ENCODE measurements at regions of chr10 and their contacts with region 1.

Region 1: DNA sequence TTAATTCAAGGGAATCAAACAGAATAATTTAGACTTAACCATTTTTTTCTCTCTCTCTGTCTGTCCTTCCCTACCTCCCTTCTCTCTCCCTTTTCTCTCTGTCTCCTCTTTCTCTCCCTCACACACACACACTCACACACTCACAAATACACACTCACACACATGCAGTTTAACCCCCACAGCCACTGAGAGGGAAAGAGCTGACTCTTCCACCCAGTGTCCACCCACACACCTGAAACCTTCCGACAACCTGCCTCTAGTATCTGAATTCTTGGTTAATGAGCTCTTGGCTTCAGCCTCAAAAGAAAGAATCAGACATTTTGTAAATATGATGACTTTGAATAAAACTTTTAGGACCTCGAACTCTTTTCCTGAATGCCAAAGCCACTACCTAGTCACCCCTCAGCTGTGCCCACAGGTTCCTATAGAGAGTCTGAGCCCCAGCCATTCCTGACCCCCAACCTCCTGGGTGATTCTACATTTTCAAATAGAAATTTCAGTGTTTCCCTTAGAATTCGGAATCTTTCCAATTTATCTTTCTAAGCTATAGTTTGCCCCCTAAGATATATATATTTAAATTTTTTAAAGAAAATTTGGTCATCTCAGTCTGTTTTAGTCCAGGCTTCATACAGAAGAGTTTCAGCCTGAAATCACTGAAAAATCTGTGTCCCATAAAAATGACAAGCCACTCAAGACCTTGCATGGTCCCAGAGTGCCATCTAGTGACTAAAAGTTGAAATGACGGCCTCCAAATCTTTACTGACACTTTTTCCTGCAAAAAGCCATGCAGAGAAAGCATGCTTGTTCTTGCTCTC is 202.8 kb downstream of the IPMK start:
- DNase-seq: peak; percentile 24 to 63
- ATAC-seq: peak in 1 of 2 experiments; percentile 68; a peak in 3 of 6 replicates
- H3K4me3 ChIP-seq: no peak overlapping the region
- H3K27ac ChIP-seq: peak overlapping the region; percentile 20 to 60; a peak in 4 of 6 replicates
- H3K4me1 ChIP-seq: peaks cover 7% of the 10 kb centered on the region
- CTCF ChIP-seq: peak; percentile 92
- EP300 ChIP-seq: no peak
- POLR2A ChIP-seq: no peak
- RAD21 ChIP-seq: peak; percentile 97

Region 2: DNA sequence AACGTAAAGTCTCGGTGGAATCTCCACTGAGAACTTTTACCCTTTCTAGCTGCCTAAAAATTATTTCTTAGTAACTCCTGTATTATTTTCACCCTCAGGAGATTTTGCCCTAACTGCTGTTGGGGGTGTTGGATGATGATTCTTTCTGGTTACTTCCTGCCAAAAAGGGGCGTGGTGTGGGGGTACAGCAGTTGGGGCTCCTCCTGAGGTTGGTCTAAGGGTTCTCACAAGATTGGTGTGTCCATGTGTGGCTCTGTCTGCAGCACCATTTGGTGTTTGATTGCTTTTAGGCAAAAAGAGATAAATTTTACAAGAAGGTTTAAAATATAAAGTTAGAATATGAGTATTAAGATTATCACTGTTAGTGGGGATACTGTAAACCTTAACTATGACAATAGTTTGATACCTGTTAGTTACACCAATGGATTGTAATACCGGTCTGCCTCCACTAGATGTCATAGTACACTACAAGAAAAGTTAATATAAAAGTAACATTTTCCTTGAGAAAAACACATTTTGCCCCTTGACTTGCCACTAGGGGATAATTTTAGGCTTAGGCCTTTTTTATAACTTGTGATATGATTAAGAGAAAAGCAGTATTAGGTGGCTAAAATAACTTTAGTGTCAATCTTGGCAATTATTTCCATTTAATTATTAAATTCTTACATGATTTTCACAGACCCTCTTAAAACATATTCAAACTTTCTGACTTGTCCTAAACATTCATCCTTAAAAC is 725.9 kb before region 1 on chr10:
- CTCF ChIA-PET with region 1: interaction called, 22 read pairs
- POLR2A ChIA-PET with region 1: no interaction called
- DNase-seq: peak; percentile 18 to 58
- ATAC-seq: peak; percentile 59 to 69; a peak in 4 of 6 replicates
- H3K4me3 ChIP-seq: no peak overlapping the region
- H3K27ac ChIP-seq: no peak overlapping the region
- H3K4me1 ChIP-seq: no peaks in the 10 kb centered on the region
- CTCF ChIP-seq: peak; percentile 80
- EP300 ChIP-seq: no peak
- POLR2A ChIP-seq: no peak
- RAD21 ChIP-seq: peak; percentile 70 to 81

Region 3: GRCh38 chr10:57579926-57580325 is 485.0 kb before region 1 on chr10:
- CTCF ChIA-PET with region 1: interaction called, 25 read pairs
- POLR2A ChIA-PET with region 1: no interaction called
- DNase-seq: peak; percentile 2 to 60
- ATAC-seq: peak; percentile 91 to 96; a peak in 5 of 6 replicates
- H3K4me3 ChIP-seq: no peak overlapping the region
- H3K27ac ChIP-seq: no peak overlapping the region
- H3K4me1 ChIP-seq: no peaks in the 10 kb centered on the region
- CTCF ChIP-seq: peak; percentile 61
- EP300 ChIP-seq: no peak
- POLR2A ChIP-seq: no peak
- RAD21 ChIP-seq: peak; percentile 86 to 89

Region 4: DNA sequence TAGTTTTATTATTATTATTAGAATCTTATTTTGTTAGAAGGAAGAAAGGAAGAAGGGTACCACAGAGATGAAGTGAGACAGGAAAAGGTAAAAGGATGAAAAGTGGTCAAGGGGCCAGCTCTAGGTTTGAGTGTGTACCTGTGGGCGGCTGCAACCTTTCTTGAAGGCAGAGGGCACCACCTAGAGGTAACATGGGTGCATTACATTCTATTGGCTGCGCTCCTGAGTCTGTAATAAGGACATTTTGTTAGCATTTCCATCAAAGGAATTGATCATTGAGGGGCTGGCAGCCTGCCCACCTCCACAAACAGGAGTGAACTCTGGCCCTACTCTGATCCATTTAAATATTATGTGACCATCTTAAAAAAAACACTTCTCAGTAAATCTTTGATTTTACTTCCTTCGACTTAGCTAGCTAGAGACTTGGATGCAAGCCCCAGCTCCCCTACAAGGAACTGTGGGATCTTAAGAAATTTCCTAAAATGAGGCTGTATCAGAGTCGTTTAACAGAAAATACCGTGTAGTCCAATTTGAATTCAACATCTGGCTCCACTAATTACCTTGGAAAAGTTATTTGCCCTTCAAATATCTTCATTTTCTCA is 407.7 kb before region 1 on chr10:
- CTCF ChIA-PET with region 1: interaction called, 11 read pairs
- POLR2A ChIA-PET with region 1: no interaction called
- DNase-seq: peak; percentile 21 to 76
- ATAC-seq: peak; percentile 81 to 96
- H3K4me3 ChIP-seq: no peak overlapping the region
- H3K27ac ChIP-seq: no peak overlapping the region
- H3K4me1 ChIP-seq: no peaks in the 10 kb centered on the region
- CTCF ChIP-seq: peak; percentile 86
- EP300 ChIP-seq: no peak
- POLR2A ChIP-seq: no peak
- RAD21 ChIP-seq: peak; percentile 89 to 92

Region 5: DNA sequence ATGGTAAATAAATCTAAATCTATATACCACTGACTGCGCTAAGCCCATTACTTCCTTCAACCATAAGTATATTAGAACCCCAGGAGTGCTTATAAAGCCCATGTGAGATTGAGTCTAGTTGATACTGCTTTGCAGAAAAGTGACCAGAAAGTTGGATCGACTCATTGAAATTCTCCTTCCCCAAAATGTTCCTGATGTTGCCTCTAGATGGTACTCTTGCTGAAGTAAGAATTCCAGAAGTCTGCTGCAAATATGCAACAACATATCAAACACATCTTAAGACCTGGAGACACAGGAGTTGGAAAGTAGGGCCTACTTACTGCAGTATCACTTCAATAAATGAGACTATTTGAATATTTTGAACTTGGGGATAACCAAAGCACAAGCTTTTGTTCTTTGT is 348.0 kb before region 1 on chr10:
- CTCF ChIA-PET with region 1: interaction called, 28 read pairs
- POLR2A ChIA-PET with region 1: no interaction called
- DNase-seq: peak in 1 of 2 experiments; percentile 54
- ATAC-seq: peak in 1 of 2 experiments; percentile 48; a peak in 3 of 6 replicates
- H3K4me3 ChIP-seq: no peak overlapping the region
- H3K27ac ChIP-seq: no peak overlapping the region
- H3K4me1 ChIP-seq: no peaks in the 10 kb centered on the region
- CTCF ChIP-seq: peak; percentile 61
- EP300 ChIP-seq: no peak
- POLR2A ChIP-seq: no peak
- RAD21 ChIP-seq: peak; percentile 67 to 74

Region 6: GRCh38 chr10:58152673-58153263 is 87.8 kb after region 1 on chr10:
- CTCF ChIA-PET with region 1: interaction called, 19 read pairs
- POLR2A ChIA-PET with region 1: no interaction called
- DNase-seq: peak in 1 of 2 experiments; percentile 62
- ATAC-seq: peak; percentile 59 to 70; a peak in 5 of 6 replicates
- H3K4me3 ChIP-seq: no peak overlapping the region
- H3K27ac ChIP-seq: no peak overlapping the region
- H3K4me1 ChIP-seq: no peaks in the 10 kb centered on the region
- CTCF ChIP-seq: peak; percentile 72
- EP300 ChIP-seq: no peak
- POLR2A ChIP-seq: no peak
- RAD21 ChIP-seq: peak; percentile 83 to 85